ENCODE measurements at regions of chr4 and their contacts with region 1.

Region 1: DNA sequence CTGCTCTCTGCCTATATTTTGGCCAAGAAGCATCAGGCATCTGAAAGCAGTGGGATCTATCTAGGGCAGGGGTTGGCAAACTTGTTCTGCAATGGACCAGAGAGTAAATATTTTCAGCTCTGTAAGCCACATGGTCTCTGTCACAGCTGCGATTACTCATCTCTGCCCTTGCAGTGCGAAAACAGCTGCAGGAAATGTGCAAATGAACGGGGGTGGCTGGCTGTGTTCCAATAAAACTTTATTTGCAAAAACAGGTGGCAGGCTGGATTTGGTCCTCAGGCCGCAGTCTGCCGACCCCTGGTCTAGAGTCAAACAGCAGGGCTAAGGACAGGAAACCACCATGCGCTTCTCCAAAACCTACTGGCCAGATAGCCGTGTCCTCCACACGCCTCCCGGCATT is 48.6 kb downstream of the ACOX3 start:
- DNase-seq: peak; percentile 58
- H3K4me3 Mint-ChIP-seq: no peak overlapping the region
- H3K27ac Mint-ChIP-seq: no peak overlapping the region
- H3K4me1 Mint-ChIP-seq: peaks cover 18% of the 10 kb centered on the region
- H3K27me3 Mint-ChIP-seq: no peaks in the 10 kb centered on the region
- CTCF ChIP-seq: no peak

Region 2: DNA sequence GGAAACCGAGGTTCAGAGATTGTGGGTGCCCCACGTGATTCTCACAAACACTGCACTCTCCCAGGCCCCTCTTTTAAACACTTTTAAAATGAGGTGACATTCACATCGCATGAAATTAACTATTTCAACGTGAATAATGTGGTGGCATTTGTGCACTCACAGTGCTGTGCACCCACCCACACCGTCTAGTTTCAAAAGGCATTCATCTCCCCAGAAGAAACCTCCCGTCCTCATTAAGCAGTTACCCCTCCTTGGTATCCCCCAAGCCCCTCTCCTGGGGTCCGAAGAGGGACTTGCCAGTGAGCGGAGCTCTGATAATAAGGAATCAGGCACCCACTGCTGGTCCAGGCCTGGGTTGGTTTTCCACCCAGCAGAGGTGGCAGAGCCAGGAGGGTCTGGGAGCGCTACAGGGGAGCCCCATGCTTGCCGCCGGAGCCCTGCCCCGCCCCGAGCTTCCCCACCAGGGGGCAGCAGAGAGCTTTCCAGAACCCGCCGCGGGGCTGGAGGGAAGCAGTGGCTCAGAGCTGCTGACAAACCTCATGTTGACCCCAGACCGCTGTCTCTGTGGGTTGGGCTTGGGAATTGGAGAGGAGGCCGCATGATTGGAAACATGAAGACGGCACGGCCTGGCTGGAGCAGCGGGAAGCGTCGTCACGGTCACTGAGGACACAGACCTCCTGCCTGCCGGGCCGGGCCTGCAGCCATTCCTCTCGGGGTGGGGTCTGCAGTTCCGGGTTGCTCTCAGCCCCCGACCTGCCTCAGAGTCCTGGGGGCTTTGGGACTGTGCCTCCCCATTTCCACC is 149.9 kb before region 1 on chr4:
- CTCF ChIA-PET with region 1: interaction called, 11 read pairs
- POLR2A ChIA-PET with region 1: no interaction called
- intact Hi-C with region 1: no loop called
- DNase-seq: peak; percentile 72
- H3K4me3 Mint-ChIP-seq: no peak overlapping the region
- H3K27ac Mint-ChIP-seq: no peak overlapping the region
- H3K4me1 Mint-ChIP-seq: no peaks in the 10 kb centered on the region
- H3K27me3 Mint-ChIP-seq: no peaks in the 10 kb centered on the region
- CTCF ChIP-seq: peak; percentile 96

Region 3: DNA sequence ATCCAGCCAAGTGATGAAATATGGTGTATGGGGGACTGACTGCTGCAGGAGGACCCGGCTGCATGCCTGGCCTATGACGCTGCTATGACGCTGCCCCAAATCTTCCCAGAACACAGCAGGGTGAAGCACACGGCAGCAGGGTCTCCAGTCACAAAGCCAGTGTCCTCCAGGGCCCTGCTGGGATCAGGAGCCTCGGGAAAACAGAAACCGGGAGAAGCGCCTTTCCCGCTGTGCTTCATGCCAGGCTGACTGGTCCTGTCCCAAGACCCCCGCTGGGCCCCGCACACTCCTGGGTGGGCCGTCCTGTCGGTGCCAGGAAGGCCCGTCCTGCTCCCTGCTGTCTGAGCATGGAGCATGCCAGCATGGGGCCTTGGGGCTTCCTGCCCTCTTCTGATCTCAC is 15.6 kb before region 1 on chr4:
- CTCF ChIA-PET with region 1: no interaction called
- POLR2A ChIA-PET with region 1: no interaction called
- intact Hi-C with region 1: no loop called
- DNase-seq: no peak
- H3K4me3 Mint-ChIP-seq: no peak overlapping the region
- H3K27ac Mint-ChIP-seq: no peak overlapping the region
- H3K4me1 Mint-ChIP-seq: no peaks in the 10 kb centered on the region
- H3K27me3 Mint-ChIP-seq: no peaks in the 10 kb centered on the region
- CTCF ChIP-seq: no peak

Region 4: DNA sequence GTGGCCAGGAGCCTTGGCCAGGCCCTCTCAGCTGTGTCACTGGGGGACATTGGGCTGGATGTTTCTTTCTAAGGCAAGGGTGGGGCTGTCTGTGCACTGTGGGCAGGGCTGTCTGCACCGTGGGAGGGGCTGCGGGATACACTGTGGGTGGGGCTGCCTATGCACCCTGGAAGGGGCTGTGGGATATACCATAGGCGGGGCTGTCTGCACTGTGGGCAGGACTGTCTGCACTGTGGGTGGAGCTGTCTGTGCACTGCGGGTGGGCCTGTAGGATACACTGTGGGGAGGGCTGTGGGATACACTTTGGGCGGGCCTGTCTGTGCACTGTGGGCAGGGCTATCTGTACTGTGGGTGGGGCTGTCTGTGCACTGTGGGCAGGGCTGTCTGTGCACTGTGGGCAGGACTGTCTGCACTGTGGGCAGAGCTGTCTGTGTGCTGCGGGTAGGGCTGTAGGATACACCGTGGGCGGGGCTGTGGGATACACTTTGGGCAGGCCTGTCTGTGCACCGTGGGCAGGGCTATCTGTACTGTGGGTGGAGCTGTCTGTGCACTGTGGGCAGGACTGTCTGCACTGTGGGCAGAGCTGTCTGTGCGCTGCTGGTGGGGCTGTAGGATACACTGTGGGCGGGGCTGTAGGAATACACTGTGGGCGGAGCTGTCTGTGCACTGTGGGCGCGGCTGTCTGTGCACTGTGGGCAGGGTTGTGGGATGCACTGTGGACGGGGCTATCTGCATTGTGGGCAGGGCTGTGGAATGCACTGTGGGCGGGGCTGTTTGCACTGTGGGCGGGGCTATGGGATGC is 17.5 kb after region 1 on chr4:
- CTCF ChIA-PET with region 1: interaction called, 11 read pairs
- POLR2A ChIA-PET with region 1: interaction called, 4 read pairs
- intact Hi-C with region 1: no loop called
- DNase-seq: no peak
- H3K4me3 Mint-ChIP-seq: no peak overlapping the region
- H3K27ac Mint-ChIP-seq: no peak overlapping the region
- H3K4me1 Mint-ChIP-seq: peaks cover 6% of the 10 kb centered on the region
- H3K27me3 Mint-ChIP-seq: no peaks in the 10 kb centered on the region
- CTCF ChIP-seq: no peak